ENCODE measurements at regions of chr19 and their contacts with region 1.

Region 1: GRCh38 chr19:35135389-35135909 is 590 bp upstream of the LGI4 start:
- DNase-seq: no peak
- H3K4me3 ChIP-seq: no peak overlapping the region
- H3K27ac ChIP-seq: no peak overlapping the region
- H3K27me3 ChIP-seq: peaks cover 12% of the 10 kb centered on the region
- CTCF ChIP-seq: peak; percentile 89

Region 2: DNA sequence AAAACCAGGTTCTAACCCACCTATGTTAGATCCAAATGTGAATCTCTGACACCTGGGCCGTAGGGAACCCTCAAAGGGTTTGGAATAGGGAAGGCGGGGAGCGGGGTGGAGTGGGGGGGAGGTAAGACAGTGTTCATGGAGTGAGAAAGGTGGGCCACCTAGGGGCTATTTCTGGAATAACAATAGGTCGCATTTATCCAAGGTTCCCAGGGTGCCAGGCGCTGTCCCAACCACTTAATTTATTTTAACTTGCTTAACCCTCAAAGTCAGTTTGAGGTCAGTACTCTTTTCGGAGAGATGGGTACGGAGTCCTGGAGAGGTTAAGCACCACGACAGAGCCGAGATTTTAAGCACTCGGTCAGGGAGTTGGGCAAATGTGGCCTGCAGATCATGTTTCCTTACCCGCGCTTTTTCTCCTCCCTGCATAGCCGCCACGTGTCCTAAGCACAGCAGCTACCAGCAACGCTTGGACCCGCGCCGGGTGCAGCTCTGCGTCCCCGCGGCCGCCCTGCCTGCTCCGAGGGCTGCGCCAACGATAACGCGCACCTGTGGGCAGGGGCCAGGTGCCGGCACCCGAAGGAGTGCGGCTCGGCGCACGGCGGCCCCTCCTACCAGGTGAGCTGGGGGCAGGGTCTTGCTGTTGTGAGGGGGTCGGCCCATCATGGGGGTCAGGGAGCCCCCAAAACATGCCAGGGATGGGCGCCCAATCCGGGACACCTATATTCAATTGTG is 44.8 kb before region 1 on chr19:
- CTCF ChIA-PET with region 1: interaction called, 13 read pairs
- POLR2A ChIA-PET with region 1: no interaction called
- DNase-seq: no peak
- H3K4me3 ChIP-seq: 0 out of 2 replicates have a peak overlapping the region, but pooled peaks have one; percentile 7
- H3K27ac ChIP-seq: no peak overlapping the region
- H3K27me3 ChIP-seq: peaks cover 3% of the 10 kb centered on the region
- CTCF ChIP-seq: peak; percentile 73

Region 3: GRCh38 chr19:35114353-35115176 is 20.9 kb before region 1 on chr19:
- CTCF ChIA-PET with region 1: interaction called, 42 read pairs
- POLR2A ChIA-PET with region 1: no interaction called
- DNase-seq: no peak
- H3K4me3 ChIP-seq: no peak overlapping the region
- H3K27ac ChIP-seq: no peak overlapping the region
- H3K27me3 ChIP-seq: peaks cover 7% of the 10 kb centered on the region
- CTCF ChIP-seq: peak; percentile 98

Region 4: GRCh38 chr19:35124098-35125060 is 11.1 kb before region 1 on chr19:
- CTCF ChIA-PET with region 1: interaction called, 44 read pairs
- POLR2A ChIA-PET with region 1: no interaction called
- DNase-seq: peak; percentile 81
- H3K4me3 ChIP-seq: peak overlapping the region; percentile 81
- H3K27ac ChIP-seq: no peak overlapping the region
- H3K27me3 ChIP-seq: peaks cover 13% of the 10 kb centered on the region
- CTCF ChIP-seq: no peak

Measured in AG04450 (cell line).